ENCODE measurements at regions of chr2 and their contacts with region 1.

Region 1: GRCh38 chr2:33304032-33304864 is 172.2 kb upstream of the RASGRP3 start:
- DNase-seq: peak; percentile 78
- ATAC-seq: peak; percentile 97
- H3K4me3 ChIP-seq: no peak overlapping the region
- H3K27ac ChIP-seq: peak overlapping the region; percentile 85
- H3K4me1 ChIP-seq: peaks cover 25% of the 10 kb centered on the region
- H3K27me3 ChIP-seq: no peaks in the 10 kb centered on the region
- CTCF ChIP-seq: no peak

Region 2: GRCh38 chr2:33134086-33134771 is 170.0 kb before region 1 on chr2:
- CTCF ChIA-PET with region 1: no interaction called
- POLR2A ChIA-PET with region 1: no interaction called
- intact Hi-C with region 1: no loop called
- DNase-seq: peak; percentile 98
- ATAC-seq: peak; percentile 88
- H3K4me3 ChIP-seq: peak overlapping the region; percentile 75
- H3K27ac ChIP-seq: peak overlapping the region; percentile 89
- H3K4me1 ChIP-seq: peaks cover 57% of the 10 kb centered on the region
- H3K27me3 ChIP-seq: no peaks in the 10 kb centered on the region
- CTCF ChIP-seq: peak; percentile 51

Region 3: DNA sequence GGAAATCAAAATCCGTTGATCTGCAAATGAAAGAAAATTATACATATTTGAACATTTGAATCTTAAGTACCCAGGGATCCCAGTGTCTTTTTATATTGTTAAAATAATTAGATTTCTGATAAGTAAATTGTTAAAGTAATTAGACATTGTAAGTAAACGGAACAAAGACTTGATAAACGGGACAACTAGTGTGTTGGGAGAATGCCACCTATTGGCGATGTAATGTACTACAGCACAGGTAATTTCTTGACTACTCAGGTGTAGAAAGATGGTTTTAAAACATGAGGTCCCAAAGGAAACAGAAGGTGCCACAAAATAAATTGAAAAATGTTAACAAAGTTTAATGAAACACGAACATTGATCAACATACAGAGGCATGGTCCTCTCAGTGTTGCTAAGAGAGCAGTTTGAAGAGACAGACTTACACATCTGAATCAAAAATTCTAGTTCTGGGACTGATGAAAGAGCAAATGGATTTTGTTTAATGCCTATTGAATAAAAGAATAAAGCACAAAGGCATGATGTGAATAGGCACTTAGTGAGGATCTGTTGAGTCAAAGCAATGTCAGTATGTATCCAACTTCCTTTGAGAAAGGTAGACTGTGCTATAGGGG is 68.8 kb after region 1 on chr2:
- CTCF ChIA-PET with region 1: no interaction called
- POLR2A ChIA-PET with region 1: no interaction called
- intact Hi-C with region 1: loop called (anchors 5 kb)
- DNase-seq: peak; percentile 86
- ATAC-seq: peak; percentile 45; the same call in 1 of the 2 replicates
- H3K4me3 ChIP-seq: no peak overlapping the region
- H3K27ac ChIP-seq: peak overlapping the region; percentile 50
- H3K4me1 ChIP-seq: peaks cover 8% of the 10 kb centered on the region; the same call in 1 of the 2 replicates
- H3K27me3 ChIP-seq: no peaks in the 10 kb centered on the region
- CTCF ChIP-seq: peak; percentile 90

Region 4: DNA sequence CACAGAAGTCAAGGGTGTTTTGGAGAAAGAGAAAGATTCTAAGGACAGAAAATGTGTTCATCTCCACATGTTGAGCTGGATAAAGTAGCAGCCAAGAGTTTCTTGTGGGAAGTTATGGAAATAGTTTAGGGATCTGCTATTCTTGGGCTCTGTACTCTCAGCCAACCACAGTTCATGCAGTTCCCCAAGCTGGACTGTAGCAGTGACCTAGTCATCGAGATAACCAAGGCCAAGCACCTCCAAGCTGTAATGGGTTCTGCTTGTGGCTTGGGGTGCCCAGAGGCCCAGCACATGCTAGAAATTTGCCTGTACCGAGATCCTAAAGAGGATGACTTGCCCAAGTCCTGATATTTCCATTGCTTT is 80.3 kb after region 1 on chr2:
- CTCF ChIA-PET with region 1: no interaction called
- POLR2A ChIA-PET with region 1: no interaction called
- intact Hi-C with region 1: no loop called
- DNase-seq: no peak
- ATAC-seq: no peak
- H3K4me3 ChIP-seq: no peak overlapping the region
- H3K27ac ChIP-seq: no peak overlapping the region
- H3K4me1 ChIP-seq: no peaks in the 10 kb centered on the region
- H3K27me3 ChIP-seq: no peaks in the 10 kb centered on the region
- CTCF ChIP-seq: no peak